ENCODE measurements at regions of chr10 and their contacts with region 1.

Region 1: GRCh38 chr10:72319416-72320254 is 35.1 kb downstream of the DNAJB12 start:
- DNase-seq: peak; percentile 87
- ATAC-seq: peak; percentile 52
- H3K4me3 Mint-ChIP-seq: peak overlapping the region; percentile 81
- H3K27ac Mint-ChIP-seq: peak overlapping the region; percentile 98
- H3K4me1 Mint-ChIP-seq: peaks cover 86% of the 10 kb centered on the region
- H3K27me3 Mint-ChIP-seq: no peaks in the 10 kb centered on the region
- CTCF ChIP-seq: no peak

Region 2: GRCh38 chr10:72088889-72089575 is 230.6 kb before region 1 on chr10:
- CTCF ChIA-PET with region 1: interaction called, 3 read pairs
- POLR2A ChIA-PET with region 1: interaction called, 35 read pairs
- intact Hi-C with region 1: no loop called
- DNase-seq: peak; percentile 29
- ATAC-seq: peak; percentile 27
- H3K4me3 Mint-ChIP-seq: peak overlapping the region; percentile 99
- H3K27ac Mint-ChIP-seq: peak overlapping the region; percentile 97
- H3K4me1 Mint-ChIP-seq: peaks cover 39% of the 10 kb centered on the region
- H3K27me3 Mint-ChIP-seq: no peaks in the 10 kb centered on the region
- CTCF ChIP-seq: no peak

Region 3: GRCh38 chr10:72223743-72224101 is 95.9 kb before region 1 on chr10:
- CTCF ChIA-PET with region 1: interaction called, 9 read pairs
- POLR2A ChIA-PET with region 1: interaction called, 234 read pairs
- intact Hi-C with region 1: loop called (anchors 1 kb)
- DNase-seq: no peak
- ATAC-seq: peak; percentile 47
- H3K4me3 Mint-ChIP-seq: peak overlapping the region; percentile 59
- H3K27ac Mint-ChIP-seq: peak overlapping the region; percentile 84
- H3K4me1 Mint-ChIP-seq: peaks cover 67% of the 10 kb centered on the region
- H3K27me3 Mint-ChIP-seq: no peaks in the 10 kb centered on the region
- CTCF ChIP-seq: no peak

Region 4: GRCh38 chr10:72254813-72255568 is 64.6 kb before region 1 on chr10:
- CTCF ChIA-PET with region 1: no interaction called
- POLR2A ChIA-PET with region 1: interaction called, 141 read pairs
- intact Hi-C with region 1: no loop called
- DNase-seq: no peak
- ATAC-seq: no peak
- H3K4me3 Mint-ChIP-seq: no peak overlapping the region
- H3K27ac Mint-ChIP-seq: peak overlapping the region; percentile 83
- H3K4me1 Mint-ChIP-seq: peaks cover 76% of the 10 kb centered on the region
- H3K27me3 Mint-ChIP-seq: no peaks in the 10 kb centered on the region
- CTCF ChIP-seq: no peak

Region 5: DNA sequence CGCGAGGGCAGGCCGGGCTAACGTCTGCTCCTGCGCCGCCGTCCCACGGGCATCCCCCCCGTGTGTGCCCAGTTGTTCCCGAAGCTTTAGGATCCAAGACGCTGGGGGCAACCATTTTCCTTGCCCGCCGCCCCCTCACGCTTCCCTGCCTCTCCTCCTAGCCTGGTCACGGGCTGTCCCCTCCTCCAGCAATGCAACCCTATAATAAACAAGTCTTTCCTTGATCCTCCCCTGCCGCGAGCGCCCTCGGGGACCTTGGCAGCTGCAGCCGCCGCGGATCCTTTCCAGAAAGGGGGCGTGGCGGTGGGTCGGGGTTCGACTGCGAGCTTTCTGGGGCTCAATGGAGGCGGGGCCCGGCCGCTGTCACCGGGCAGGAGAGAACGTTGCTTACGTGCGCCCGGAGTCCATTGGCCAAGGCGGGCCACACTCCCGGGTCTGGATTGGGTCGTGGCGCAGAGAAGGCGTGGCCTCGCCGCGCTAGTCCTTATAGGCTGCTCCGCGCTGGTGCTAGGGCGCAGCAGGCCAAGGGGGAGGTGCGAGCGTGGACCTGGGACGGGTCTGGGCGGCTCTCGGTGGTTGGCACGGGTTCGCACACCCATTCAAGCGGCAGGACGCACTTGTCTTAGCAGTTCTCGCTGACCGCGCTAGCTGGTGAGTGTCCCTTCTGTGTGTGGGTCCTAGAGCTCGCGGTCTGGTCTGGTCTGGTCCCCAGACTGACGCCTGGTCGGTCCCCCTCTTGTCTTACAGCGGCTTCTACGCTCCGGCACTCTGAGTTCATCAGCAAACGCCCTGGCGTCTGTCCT is 46.0 kb before region 1 on chr10 and contains the start of gene DDIT4:
- CTCF ChIA-PET with region 1: interaction called, 33 read pairs
- POLR2A ChIA-PET with region 1: interaction called, 967 read pairs
- intact Hi-C with region 1: loop called (anchors 1 kb)
- DNase-seq: peak; percentile 95
- ATAC-seq: peak; percentile 93
- H3K4me3 Mint-ChIP-seq: peak within 1 kb of the TSS; percentile 98
- H3K27ac Mint-ChIP-seq: peak within 1 kb of the TSS; percentile 94
- H3K4me1 Mint-ChIP-seq: peaks cover 40% of the 10 kb centered on the region
- H3K27me3 Mint-ChIP-seq: no peaks in the 10 kb centered on the region
- CTCF ChIP-seq: no peak
- total RNA-seq, gene DDIT4: 175 and 180 TPM in 2 replicates

Region 6: DNA sequence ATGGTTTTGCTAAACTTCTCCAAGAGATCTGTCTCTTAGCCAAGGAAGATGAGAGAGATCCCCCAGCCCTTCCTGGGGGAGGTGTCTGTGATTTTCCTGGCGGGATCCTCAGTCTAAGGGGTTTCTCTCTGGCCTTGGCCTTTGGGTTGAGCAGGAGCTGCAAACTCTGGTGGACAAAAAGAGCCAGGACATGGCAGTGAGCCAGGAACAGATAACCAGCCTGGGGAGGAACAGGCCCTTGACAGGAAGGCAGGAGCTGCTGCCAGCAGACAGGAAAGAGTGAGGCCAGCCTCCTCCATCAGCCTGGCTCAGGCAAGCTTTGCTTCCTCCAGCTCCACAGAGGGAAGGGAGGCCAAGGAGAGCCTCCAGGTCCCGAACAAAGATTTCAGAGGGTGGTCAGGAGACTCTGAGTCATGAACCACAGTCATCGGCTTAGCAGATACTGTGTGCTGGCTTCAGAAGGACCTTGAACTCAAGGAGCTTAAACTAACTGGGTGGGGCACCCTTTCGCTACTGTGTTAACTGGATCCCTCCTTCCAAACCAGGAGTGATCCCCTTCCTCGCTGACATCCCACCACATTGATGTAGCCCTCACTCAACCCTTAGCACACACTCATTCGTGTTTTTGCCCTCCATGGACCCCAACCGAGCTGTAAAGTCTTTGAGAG is 11.2 kb before region 1 on chr10:
- CTCF ChIA-PET with region 1: interaction called, 5 read pairs
- POLR2A ChIA-PET with region 1: interaction called, 1,996 read pairs
- intact Hi-C with region 1: loop called (anchors 1 kb)
- DNase-seq: no peak
- ATAC-seq: peak; percentile 27
- H3K4me3 Mint-ChIP-seq: no peak overlapping the region
- H3K27ac Mint-ChIP-seq: peak overlapping the region; percentile 50
- H3K4me1 Mint-ChIP-seq: peaks cover 60% of the 10 kb centered on the region
- H3K27me3 Mint-ChIP-seq: no peaks in the 10 kb centered on the region
- CTCF ChIP-seq: no peak

Region 7: GRCh38 chr10:72386916-72387586 is 67.4 kb after region 1 on chr10:
- CTCF ChIA-PET with region 1: no interaction called
- POLR2A ChIA-PET with region 1: no interaction called
- intact Hi-C with region 1: no loop called
- DNase-seq: no peak
- ATAC-seq: no peak
- H3K4me3 Mint-ChIP-seq: no peak overlapping the region
- H3K27ac Mint-ChIP-seq: no peak overlapping the region
- H3K4me1 Mint-ChIP-seq: peaks cover 3% of the 10 kb centered on the region
- H3K27me3 Mint-ChIP-seq: no peaks in the 10 kb centered on the region
- CTCF ChIP-seq: no peak

Region 8: DNA sequence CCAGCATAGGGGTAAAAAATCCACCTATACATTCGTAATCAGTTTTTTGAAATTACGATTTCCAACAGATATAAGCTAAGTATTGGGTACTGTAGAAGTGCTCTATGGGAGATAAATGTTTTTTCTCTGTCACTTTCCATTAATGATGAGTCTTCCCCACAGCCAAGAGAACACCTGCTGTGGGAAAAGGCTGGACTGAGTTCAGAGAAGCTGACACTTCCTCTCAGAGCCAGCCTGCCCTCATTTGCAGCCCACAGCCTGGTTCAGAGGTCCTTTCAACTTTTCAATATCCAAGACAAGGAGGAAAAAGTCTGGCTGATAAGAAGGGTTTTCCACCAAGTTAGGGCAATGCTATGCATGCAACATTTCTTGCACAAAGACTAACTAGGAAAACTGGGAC is 99.6 kb after region 1 on chr10:
- CTCF ChIA-PET with region 1: no interaction called
- POLR2A ChIA-PET with region 1: no interaction called
- intact Hi-C with region 1: no loop called
- DNase-seq: no peak
- ATAC-seq: no peak
- H3K4me3 Mint-ChIP-seq: no peak overlapping the region
- H3K27ac Mint-ChIP-seq: no peak overlapping the region
- H3K4me1 Mint-ChIP-seq: no peaks in the 10 kb centered on the region
- H3K27me3 Mint-ChIP-seq: no peaks in the 10 kb centered on the region
- CTCF ChIP-seq: no peak